ENCODE measurements at regions of chr14 and their contacts with region 1.

Region 1: GRCh38 chr14:31950764-31951637 is 126.1 kb upstream of the ARHGAP5 start:
- DNase-seq: no peak
- H3K4me3 ChIP-seq: no peak overlapping the region
- CTCF ChIP-seq: no peak

Region 2: DNA sequence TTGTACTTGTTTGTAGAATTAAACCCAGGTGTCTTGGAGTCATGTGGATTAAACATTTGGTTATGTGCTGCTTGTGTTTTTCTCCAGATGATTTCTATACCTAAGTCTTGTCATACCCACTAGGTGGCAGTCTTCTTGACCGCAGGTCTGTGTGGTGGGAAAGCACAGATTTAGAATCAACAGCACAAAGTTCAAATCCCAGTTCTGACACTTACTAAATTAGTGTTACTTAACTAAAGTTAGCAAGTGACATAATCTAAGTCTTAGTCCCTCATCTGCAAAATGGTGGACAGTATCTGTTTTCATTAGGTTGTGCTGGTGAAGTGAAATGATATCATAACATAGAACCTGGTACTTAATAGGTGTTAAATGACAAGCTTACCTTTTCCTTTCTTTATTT is 24.9 kb before region 1 on chr14:
- CTCF ChIA-PET with region 1: interaction called, 14 read pairs
- POLR2A ChIA-PET with region 1: no interaction called
- DNase-seq: no peak
- H3K4me3 ChIP-seq: no peak overlapping the region
- CTCF ChIP-seq: peak; percentile 32

Region 3: GRCh38 chr14:31937721-31938346 is 13.2 kb before region 1 on chr14:
- CTCF ChIA-PET with region 1: interaction called, 19 read pairs
- POLR2A ChIA-PET with region 1: no interaction called
- DNase-seq: no peak
- H3K4me3 ChIP-seq: no peak overlapping the region
- CTCF ChIP-seq: no peak

Region 4: DNA sequence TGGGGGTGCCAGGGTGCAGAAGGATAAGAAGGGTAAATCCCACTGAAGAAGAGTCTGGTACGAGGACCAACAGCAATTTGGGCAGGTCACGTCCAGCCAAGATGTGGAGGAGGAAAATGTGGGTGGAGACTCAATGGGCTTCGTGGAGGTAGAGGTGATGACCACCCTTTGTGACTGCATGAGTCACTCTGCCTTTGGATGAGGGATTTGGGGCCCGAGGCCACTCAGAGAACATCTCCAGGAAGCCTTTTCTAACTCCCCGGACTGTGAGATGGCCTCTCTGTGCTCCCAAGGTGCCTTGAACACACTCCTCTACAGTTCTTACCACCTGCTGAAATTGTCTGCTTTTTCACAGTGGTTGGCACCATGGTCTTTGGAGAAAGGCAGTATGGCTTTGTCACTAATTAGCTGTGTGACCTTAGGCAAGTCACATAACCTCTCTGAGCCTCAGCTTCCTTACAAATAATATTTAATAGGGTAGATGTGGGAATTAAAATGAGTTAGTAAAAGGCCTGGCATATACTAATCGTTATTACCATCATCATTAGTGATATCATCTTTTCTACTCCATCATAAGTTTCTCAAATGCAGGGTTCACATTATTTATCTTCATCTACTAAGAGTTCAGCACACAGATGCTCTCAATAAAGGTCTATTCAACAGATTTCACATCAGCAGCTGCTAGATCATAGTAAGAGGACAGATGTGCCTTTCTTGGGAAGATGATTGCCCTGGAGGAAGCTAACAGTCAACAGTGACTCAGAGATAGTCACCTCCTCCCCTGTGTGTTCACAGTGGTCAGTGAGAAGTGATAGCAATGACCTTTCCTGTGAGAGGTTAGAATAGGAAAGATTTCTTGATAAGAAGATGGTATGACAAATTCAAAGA is 59.2 kb after region 1 on chr14:
- CTCF ChIA-PET with region 1: no interaction called
- POLR2A ChIA-PET with region 1: no interaction called
- DNase-seq: no peak
- H3K4me3 ChIP-seq: no peak overlapping the region
- CTCF ChIP-seq: no peak

Measured in AG04449 (cell line).